ENCODE measurements at regions of chr20 and their contacts with region 1.

Region 1: GRCh38 chr20:44069203-44070011 is 117.6 kb downstream of the JPH2 start:
- DNase-seq: no peak
- ATAC-seq: no peak
- H3K4me3 ChIP-seq: peak overlapping the region in 1 of 10 donors; percentile 27
- H3K27ac ChIP-seq: peak overlapping the region in 2 of 10 donors; percentile 40 to 86
- H3K4me1 ChIP-seq: peaks cover 0 to 48% (median 3%) of the 10 kb centered on the region in 9 donors
- H3K27me3 ChIP-seq: peaks cover 0 to 6% (median 0%) of the 10 kb centered on the region in 7 donors
- CTCF ChIP-seq: no peak

Region 2: GRCh38 chr20:43761386-43762340 is 307.7 kb before region 1 on chr20:
- intact Hi-C with region 1: loop called in 1 of 10 experiments (anchors 5 kb)
- DNase-seq: no peak
- ATAC-seq: peak in 3 of 8 donors; percentile 4 to 68 (median 61)
- H3K4me3 ChIP-seq: no peak overlapping the region
- H3K27ac ChIP-seq: no peak overlapping the region
- H3K4me1 ChIP-seq: peaks cover 0 to 10% (median under 1%) of the 10 kb centered on the region in 9 donors
- H3K27me3 ChIP-seq: peaks cover 0 to 39% (median 0%) of the 10 kb centered on the region in 7 donors
- CTCF ChIP-seq: no peak